Left ventricle myocardium inferior (tissue), 1 donor: ENCODE measurements at regions of chr2 and their contacts with region 1.

Region 1: GRCh38 chr2:231925303-231926179 is 655 bp downstream of the NPPC start:
- DNase-seq: peak; percentile 86
- H3K4me3 ChIP-seq: peak overlapping the region; percentile 71
- H3K27ac ChIP-seq: no peak overlapping the region
- H3K4me1 ChIP-seq: peaks cover 30% of the 10 kb centered on the region
- H3K27me3 ChIP-seq: peaks cover 98% of the 10 kb centered on the region
- CTCF ChIP-seq: peak; percentile 96

Region 2: DNA sequence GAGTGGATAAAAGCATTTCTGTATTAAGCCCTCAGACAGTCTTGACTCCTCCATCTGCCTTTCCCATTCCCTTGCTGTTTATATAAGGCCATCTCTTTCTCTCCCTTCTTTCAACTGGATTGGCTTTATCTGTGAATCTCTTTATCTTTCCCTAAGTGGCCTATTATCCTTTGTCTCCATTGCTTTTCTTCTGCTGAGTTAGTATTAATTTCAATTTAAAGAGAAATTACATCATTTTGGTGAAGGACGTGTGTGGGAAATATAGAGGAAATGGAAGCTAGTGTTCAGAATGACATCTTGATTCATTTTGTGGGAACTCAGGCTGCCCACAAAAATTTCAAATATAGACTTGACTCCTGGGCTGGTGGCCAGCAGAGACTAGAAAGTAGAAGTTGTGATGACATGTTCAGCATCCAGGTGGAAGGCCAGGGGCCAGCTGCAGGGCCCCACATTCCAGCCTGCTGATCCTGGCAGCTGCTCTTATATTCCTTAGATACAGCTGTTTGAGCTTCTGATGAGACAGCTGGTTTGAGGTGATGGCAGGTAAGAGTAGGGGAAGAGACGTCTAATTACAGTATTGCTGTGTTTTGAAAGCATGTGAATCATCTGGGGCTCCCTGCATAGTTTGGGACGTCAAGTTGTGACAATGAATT is 88.3 kb after region 1 on chr2:
- intact Hi-C with region 1: no loop called
- DNase-seq: no peak
- H3K4me3 ChIP-seq: no peak overlapping the region
- H3K27ac ChIP-seq: no peak overlapping the region
- H3K4me1 ChIP-seq: peaks cover 34% of the 10 kb centered on the region
- H3K27me3 ChIP-seq: no peaks in the 10 kb centered on the region
- CTCF ChIP-seq: no peak

Region 3: DNA sequence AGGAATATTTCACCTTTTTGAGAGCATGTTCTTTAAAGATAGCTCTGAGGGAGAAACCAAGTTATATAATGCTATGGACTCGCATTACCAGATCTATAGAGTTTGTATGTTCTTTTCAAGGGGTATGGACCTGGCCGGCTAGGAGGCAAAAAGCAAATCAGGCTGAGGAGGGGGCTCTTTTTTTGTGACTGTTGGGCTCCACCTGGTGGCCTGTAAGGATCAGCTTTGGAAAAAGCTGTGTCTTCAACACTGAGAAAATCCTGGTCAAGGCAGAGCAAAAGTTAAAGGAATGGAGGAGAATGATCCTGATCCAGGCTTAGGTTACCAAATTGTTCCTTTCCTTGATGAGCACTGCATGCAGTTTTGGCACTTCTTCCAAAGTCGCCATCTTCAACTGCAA is 216.5 kb after region 1 on chr2:
- intact Hi-C with region 1: loop called (anchors 5 kb)
- DNase-seq: no peak
- H3K4me3 ChIP-seq: no peak overlapping the region
- H3K27ac ChIP-seq: no peak overlapping the region
- H3K4me1 ChIP-seq: peaks cover 18% of the 10 kb centered on the region
- H3K27me3 ChIP-seq: no peaks in the 10 kb centered on the region
- CTCF ChIP-seq: peak; percentile 79

Region 4: GRCh38 chr2:232162186-232162585 is 236.6 kb after region 1 on chr2:
- intact Hi-C with region 1: no loop called
- DNase-seq: no peak
- H3K4me3 ChIP-seq: no peak overlapping the region
- H3K27ac ChIP-seq: no peak overlapping the region
- H3K4me1 ChIP-seq: no peaks in the 10 kb centered on the region
- H3K27me3 ChIP-seq: no peaks in the 10 kb centered on the region
- CTCF ChIP-seq: no peak

Region 5: GRCh38 chr2:232250246-232251175 is 325.0 kb after region 1 on chr2:
- intact Hi-C with region 1: no loop called
- DNase-seq: no peak
- H3K4me3 ChIP-seq: no peak overlapping the region
- H3K27ac ChIP-seq: no peak overlapping the region
- H3K4me1 ChIP-seq: no peaks in the 10 kb centered on the region
- H3K27me3 ChIP-seq: no peaks in the 10 kb centered on the region
- CTCF ChIP-seq: no peak

Region 6: DNA sequence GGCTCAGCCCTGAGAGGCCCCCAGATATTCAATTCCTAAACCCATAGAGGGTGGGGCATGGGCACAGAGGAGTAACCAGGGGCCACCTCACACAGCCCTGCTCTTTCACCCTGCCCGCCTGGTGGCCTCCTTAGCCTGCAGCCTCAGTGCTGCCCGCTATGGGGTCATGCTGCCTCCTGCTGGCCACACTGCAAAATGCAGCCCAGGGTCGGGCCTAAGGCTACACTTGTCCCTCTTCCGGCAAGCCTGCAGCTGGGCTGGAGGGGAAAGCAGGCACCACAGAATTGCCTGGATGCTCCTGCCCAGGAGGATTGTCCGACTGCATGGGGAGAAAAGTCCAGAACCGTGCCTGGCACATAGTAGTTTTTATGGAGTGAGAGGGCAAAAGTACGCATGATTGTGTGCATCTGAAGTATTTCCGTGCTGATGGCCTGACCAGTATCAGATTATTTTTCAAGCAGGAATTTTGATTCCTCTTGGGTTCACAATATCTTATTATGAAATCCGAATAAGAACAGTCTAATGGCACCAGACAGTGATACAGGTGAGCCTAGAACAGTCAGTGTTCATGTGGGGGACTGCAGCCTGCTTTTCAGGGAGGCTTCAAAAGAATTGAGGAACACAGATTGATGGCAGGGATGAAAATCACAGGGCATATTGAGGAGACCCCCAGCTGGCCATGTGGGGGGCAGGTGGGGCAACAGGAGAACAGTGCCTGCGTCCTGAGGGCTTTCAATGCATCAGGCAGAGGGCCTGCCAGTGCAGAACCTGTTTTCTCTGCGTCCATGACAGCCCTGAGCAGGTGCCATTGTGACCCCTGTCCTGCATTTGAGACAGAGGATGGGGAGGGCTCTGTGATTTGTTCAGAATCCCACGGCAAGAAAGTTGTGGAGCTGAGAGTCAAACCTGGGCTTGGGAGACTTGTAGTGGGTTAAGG is 401.8 kb after region 1 on chr2:
- intact Hi-C with region 1: loop called (anchors 10 kb)
- DNase-seq: peak; percentile 72
- H3K4me3 ChIP-seq: no peak overlapping the region
- H3K27ac ChIP-seq: no peak overlapping the region
- H3K4me1 ChIP-seq: peaks cover 4% of the 10 kb centered on the region
- H3K27me3 ChIP-seq: no peaks in the 10 kb centered on the region
- CTCF ChIP-seq: peak; percentile 75